ENCODE measurements at regions of chr2 and their contacts with region 1.

Region 1: GRCh38 chr2:12716282-12717190 is at the start of gene TRIB2:
- DNase-seq: peak; percentile 87
- H3K4me3 ChIP-seq: peak within 1 kb of the TSS; percentile 88
- H3K27ac ChIP-seq: peak within 1 kb of the TSS; percentile 87
- H3K27me3 ChIP-seq: no peaks in the 10 kb centered on the region
- CTCF ChIP-seq: no peak

Region 2: DNA sequence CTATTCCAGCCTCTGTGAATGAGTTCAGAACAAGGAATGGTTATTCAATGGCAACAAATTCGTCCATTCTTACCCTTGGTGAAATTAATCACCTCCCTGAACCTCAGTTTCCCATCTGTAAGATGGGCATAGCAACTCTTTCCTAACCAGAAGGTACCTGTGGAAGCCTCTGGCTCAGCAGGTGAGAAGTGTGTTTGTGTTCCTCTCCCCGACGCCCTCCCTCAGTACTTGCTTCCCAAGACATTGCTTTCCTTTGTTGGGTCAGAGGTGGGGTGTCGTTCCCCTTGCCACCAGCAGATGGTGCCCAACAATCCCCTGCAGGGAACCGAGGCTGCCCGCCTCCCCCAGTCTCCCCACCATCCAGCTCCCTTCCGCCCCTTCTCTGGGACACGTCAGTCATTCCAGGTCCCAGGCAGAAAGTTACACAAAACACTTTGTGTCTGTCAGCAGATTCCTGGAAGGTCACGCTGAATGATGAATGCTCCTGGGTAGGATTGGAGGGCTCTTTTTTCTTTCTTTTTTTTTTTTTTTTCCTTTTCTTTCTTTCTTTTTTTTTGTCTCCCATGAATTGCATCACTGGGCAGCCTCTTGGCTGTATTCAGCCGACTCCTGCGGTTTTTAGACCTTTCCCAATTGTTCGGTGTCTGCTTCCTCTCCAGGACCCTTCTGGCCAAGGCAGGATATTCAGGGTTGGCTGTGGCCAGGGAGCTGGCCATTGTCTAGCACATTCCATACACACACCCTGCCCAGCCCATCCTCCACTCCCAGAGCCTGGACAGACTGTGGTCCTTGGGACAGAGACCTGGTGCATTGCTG is 852.8 kb before region 1 on chr2:
- in situ Hi-C with region 1: loop called (anchors 25 kb)
- DNase-seq: peak; percentile 88
- H3K4me3 ChIP-seq: no peak overlapping the region
- H3K27ac ChIP-seq: no peak overlapping the region
- H3K27me3 ChIP-seq: no peaks in the 10 kb centered on the region
- CTCF ChIP-seq: peak; percentile 96

Region 3: GRCh38 chr2:12320991-12321641 is 395.4 kb before region 1 on chr2:
- in situ Hi-C with region 1: loop called (anchors 25 kb)
- DNase-seq: peak; percentile 90
- H3K4me3 ChIP-seq: no peak overlapping the region
- H3K27ac ChIP-seq: peak overlapping the region; percentile 46
- H3K27me3 ChIP-seq: no peaks in the 10 kb centered on the region
- CTCF ChIP-seq: peak; percentile 34

Region 4: DNA sequence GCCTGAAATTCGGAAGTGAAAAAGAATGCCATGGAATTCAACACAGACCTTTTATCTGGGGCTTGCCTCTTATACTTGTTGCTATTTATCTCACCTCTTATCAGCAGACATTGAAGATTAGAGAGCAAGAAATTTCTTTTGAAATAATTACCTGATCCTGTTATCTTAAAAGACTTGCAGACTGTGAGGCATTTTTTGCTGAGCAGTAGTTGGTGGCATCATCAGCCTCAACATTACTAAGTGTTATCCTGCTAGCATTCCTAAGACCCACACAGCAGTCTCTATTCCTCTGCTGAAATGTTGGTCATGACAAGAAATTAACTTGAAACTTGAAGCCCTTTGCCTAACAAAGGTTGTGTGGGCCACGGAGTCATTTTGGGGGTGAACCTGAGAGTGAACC is 186.7 kb after region 1 on chr2:
- in situ Hi-C with region 1: no loop called
- DNase-seq: no peak
- H3K4me3 ChIP-seq: no peak overlapping the region
- H3K27ac ChIP-seq: no peak overlapping the region
- H3K27me3 ChIP-seq: no peaks in the 10 kb centered on the region
- CTCF ChIP-seq: no peak